Aorta (tissue), 5 donors: ENCODE measurements at regions of chr6 and their contacts with region 1.

Region 1: DNA sequence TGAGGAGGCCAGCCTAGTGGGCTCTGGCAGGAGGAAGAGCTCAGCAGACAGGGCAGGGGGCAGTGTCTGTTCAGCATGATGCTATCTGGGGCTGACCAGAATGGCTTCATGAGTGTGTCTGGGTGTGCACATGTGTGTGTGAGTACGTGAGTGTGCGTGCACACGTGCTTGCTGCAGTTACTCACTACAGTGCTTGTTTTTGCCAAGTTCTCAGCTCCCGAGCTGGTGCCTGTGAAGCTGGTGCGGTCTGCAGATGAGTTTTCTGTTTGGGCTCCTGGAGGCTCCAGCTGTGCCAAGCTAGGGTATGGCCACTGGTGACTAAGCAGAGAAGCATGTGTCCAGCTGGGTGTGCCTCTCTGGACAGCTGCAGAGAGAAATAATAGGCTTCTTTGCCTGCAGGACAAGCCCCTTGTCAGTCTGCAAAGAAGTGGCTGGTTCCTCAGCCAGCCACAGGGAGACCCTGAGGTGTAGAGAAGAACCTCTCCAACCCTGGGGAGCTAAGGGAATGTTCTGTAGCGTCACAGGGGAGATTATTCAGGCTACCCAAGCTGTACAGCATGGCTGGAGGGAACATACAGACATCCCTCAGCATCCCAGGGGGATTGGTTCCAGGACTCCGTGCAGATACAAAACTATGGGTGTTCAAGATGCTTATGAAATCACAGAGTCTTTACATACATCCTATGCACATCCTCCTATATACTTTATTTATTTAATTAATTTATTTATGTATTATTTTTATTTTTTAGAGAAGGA is 40.2 kb upstream of the FAM50B start:
- DNase-seq: peak; percentile 89
- ATAC-seq: peak; percentile 84
- H3K4me3 ChIP-seq: no peak overlapping the region
- H3K27ac ChIP-seq: peak overlapping the region in 1 of 2 donors; percentile 87
- H3K4me1 ChIP-seq: peaks cover 5 to 11% of the 10 kb centered on the region in 2 donors
- H3K27me3 ChIP-seq: no peaks in the 10 kb centered on the region

Region 2: DNA sequence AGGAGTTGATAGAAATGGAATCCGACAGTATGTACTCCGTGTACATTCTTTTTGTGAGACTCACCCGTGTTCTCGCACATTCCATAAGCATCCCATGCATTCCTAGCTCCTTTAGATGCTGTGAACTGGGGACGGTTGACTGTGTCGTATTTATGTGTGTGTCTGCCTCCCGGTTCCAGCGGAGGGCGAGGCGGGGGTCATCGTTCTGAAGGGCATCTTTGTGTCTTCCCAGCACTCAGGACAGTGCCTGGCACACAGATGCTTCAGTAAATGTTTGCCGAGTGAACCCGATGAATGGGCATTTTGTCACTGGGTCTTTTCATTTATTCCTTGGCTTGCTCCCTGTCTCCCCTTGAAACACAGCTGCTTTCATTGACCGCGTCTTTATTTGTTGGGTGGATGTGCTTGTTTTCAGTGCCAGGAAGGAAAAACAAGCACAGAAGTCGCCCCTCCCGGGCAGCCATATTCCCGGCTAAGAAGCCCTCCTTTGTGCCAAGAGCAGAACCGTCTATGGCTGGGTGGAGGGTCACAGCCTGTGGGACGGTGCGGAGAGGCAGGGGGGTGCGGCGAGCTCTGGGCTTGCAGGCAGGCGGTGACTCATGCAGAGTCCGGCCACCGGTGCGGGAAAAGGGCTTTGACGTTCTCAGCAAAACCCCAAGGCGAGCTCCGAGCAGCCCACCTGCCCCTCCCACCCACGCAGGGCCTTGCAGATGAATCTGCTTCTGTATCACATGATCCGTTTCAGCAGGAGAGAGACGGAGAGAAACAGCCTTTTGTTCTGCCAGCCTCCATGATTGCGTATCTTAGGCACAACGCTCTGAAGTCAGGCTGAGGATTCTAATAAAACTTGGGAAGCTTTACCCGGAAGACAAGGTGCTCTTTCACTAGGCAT is 561.4 kb before region 1 on chr6:
- intact Hi-C with region 1: no loop called
- DNase-seq: peak; percentile 79 to 88
- ATAC-seq: peak; percentile 65
- H3K4me3 ChIP-seq: no peak overlapping the region
- H3K27ac ChIP-seq: no peak overlapping the region
- H3K4me1 ChIP-seq: no peaks in the 10 kb centered on the region
- H3K27me3 ChIP-seq: no peaks in the 10 kb centered on the region

Region 3: GRCh38 chr6:3841711-3842565 is 33.0 kb after region 1 on chr6:
- intact Hi-C with region 1: loop called in 1 of 2 experiments (anchors 5 kb)
- DNase-seq: peak in 1 of 2 donors; percentile 78
- ATAC-seq: peak; percentile 75
- H3K4me3 ChIP-seq: no peak overlapping the region
- H3K27ac ChIP-seq: peak overlapping the region; percentile 83 to 99
- H3K4me1 ChIP-seq: peaks cover 5% of the 10 kb centered on the region in 2 donors
- H3K27me3 ChIP-seq: no peaks in the 10 kb centered on the region

Region 4: DNA sequence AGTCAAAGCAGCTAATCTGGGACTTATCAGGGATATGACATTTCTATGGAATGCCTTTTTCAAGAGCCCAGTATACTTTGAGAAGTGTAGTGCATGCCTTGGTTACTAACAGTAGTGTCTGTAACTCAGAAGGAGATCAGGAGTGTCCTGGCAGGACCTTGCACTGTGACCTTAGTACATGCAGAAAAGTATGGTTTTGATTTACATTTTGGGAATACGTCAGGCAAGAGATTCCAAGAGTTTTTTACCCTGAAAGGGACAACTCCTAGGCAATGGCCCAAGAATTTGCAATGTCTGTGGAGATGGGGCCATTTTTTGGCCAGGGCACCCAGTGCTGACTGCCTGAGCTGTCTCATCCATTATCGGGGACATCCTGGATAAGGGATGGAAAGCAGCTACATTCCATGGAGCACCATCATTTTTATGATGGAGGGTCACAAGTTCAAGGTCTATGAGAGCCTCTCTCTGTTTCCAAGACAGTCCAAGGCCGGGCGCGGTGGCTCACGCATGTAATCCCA is 120.4 kb after region 1 on chr6:
- intact Hi-C with region 1: no loop called
- DNase-seq: peak; percentile 61 to 85
- ATAC-seq: peak; percentile 60
- H3K4me3 ChIP-seq: no peak overlapping the region
- H3K27ac ChIP-seq: peak overlapping the region; percentile 3 to 9
- H3K4me1 ChIP-seq: no peaks in the 10 kb centered on the region
- H3K27me3 ChIP-seq: no peaks in the 10 kb centered on the region